K562 (cell line): ENCODE measurements at regions of chr1 and their contacts with region 1.

Region 1: GRCh38 chr1:211654838-211655787 is 20.3 kb downstream of the NEK2 start:
- DNase-seq: peak; percentile 86 to 94 (median 88)
- ATAC-seq: peak; percentile 98
- H3K4me3 ChIP-seq: no peak overlapping the region
- H3K27ac ChIP-seq: no peak overlapping the region
- H3K4me1 ChIP-seq: peaks cover 0 to 9% of the 10 kb centered on the region in 2 experiments; a peak in 3 of 5 replicates
- H3K27me3 ChIP-seq: no peaks in the 10 kb centered on the region
- CTCF ChIP-seq: peak; percentile 97 to 99 (median 99)
- EP300 ChIP-seq: peak; percentile 29; the same call in 1 of the 2 replicates
- POLR2A ChIP-seq: no peak
- RAD21 ChIP-seq: peak; percentile 100

Region 2: DNA sequence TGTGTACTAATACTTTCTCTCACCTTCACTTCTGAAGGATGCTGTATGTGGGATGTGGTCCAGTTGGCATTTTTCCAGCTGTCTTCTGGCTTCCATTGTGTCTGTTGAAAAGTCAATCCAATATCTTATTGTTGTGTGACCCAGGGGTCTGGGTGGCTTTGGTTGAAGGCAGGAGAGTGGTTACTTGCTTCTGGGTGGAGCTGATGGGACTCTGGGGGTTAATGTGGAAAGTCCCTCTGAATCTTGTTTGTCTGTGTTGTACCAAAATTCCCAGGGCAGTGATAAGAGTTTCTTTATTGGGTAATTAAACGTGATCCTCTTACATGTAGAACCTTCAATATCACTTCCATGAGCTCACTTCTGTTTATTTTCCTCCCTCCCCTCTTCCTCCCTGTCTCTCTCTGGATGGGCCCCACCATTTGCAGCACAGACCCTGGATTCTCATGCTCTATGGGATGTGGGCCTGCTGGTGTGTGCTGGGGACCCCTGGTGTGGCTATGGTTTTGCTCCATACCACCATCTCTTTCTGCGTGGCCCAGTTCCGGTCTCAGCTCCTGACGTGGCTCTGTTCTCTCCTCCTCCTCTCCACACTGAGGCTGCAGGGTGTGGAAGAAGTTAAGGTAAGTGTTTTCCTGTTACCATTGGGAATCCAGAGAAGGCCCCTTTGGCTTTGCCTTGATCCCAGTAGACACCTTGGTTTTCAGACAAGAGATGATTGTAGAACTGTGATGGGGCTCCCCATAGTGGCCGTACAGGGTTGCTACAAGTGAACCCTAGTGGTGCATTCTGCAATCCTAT is 1254.9 kb before region 1 on chr1:
- CTCF ChIA-PET with region 1: no interaction called
- POLR2A ChIA-PET with region 1: no interaction called
- in situ Hi-C with region 1: loop called (anchors 25 kb)
- intact Hi-C with region 1: no loop called
- DNase-seq: peak; percentile 45 to 66 (median 57)
- ATAC-seq: peak; percentile 98
- H3K4me3 ChIP-seq: no peak overlapping the region
- H3K27ac ChIP-seq: no peak overlapping the region
- H3K4me1 ChIP-seq: no peaks in the 10 kb centered on the region
- H3K27me3 ChIP-seq: no peaks in the 10 kb centered on the region; a peak in 1 of 5 replicates
- CTCF ChIP-seq: peak; percentile 75 to 93 (median 84)
- EP300 ChIP-seq: no peak
- POLR2A ChIP-seq: no peak
- RAD21 ChIP-seq: peak; percentile 38 to 71; a peak in 3 of 4 replicates

Region 3: DNA sequence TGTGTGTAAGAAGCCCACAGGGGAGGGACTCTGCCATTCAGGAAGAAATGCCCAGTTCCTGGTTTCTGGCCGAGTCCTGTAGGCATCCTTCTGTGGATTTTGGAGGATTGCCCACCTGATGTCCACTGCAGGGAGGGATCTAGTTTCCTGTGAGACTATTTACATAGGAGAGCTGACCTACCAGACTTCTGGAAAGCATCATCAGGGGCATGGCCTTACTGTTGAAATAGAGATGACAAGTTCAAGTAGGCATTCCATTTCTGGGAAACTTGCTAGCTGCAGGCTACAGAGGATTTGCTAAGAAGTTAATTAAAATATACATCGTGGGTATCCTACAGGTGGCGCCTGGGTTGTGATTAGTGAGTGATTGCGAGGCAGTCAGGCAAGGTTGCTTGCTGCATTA is 1177.7 kb before region 1 on chr1:
- CTCF ChIA-PET with region 1: no interaction called
- POLR2A ChIA-PET with region 1: no interaction called
- in situ Hi-C with region 1: no loop called
- intact Hi-C with region 1: no loop called
- DNase-seq: peak in 1 of 4 experiments; percentile 4
- ATAC-seq: no peak
- H3K4me3 ChIP-seq: no peak overlapping the region
- H3K27ac ChIP-seq: no peak overlapping the region
- H3K4me1 ChIP-seq: no peaks in the 10 kb centered on the region
- H3K27me3 ChIP-seq: no peaks in the 10 kb centered on the region; a peak in 1 of 5 replicates
- CTCF ChIP-seq: peak in 1 of 3 experiments; percentile 6; a peak in 1 of 6 replicates
- EP300 ChIP-seq: no peak
- POLR2A ChIP-seq: no peak
- RAD21 ChIP-seq: no peak

Region 4: DNA sequence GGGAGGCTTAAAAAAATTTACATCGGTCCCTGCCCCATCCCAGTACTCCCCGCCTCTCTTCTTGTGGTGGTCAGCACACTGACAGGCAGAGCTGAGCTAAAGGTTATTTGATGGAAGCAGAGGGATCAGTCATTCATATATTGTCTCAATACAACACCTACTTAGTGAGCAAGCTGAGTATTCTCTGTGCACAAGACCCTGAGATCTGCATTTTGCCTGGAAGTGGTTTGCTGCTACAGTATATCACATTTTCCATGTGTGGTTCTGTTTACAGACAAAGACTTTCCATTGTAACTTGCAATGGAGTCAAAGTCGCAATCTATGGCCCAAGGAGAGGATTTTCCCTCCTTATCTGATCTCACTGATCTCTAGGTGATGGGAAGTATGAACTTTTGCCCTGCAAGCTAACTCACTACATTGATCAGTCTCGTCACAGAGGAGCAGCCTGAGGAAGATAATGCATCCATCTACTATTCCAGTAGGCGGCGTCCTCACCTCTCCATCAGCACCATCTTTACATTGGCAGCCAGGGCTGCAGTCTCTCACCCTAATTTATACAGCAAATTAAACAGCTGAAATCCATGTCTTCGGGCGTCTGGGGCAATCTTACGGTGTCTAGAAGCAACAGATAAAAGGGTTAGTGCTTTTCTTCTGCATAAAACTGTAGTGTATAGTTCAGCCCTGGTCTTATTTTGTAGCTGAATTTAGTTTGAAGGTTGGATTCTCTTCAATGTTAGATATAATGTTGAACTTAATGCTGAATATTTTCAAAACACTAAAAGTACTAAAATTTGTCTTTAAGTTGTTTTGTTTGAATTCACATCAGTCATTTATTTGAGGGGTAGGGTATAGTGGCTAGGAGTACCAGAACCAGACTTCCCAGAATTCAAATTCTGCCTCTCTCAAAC is 331.7 kb before region 1 on chr1:
- CTCF ChIA-PET with region 1: interaction called, 3 read pairs
- POLR2A ChIA-PET with region 1: no interaction called
- in situ Hi-C with region 1: loop called (anchors 10 kb)
- intact Hi-C with region 1: loop called (anchors 1 kb)
- DNase-seq: peak; percentile 42 to 85 (median 62)
- ATAC-seq: peak; percentile 79
- H3K4me3 ChIP-seq: no peak overlapping the region
- H3K27ac ChIP-seq: no peak overlapping the region
- H3K4me1 ChIP-seq: peaks cover 17 to 24% of the 10 kb centered on the region in 2 experiments
- H3K27me3 ChIP-seq: no peaks in the 10 kb centered on the region
- CTCF ChIP-seq: peak; percentile 91 to 95 (median 91)
- EP300 ChIP-seq: no peak
- POLR2A ChIP-seq: no peak
- RAD21 ChIP-seq: peak; percentile 92 to 95

Region 5: GRCh38 chr1:211514030-211514754 is 140.9 kb before region 1 on chr1:
- CTCF ChIA-PET with region 1: interaction called, 29 read pairs
- POLR2A ChIA-PET with region 1: no interaction called
- in situ Hi-C with region 1: loop called (anchors 5 kb)
- intact Hi-C with region 1: loop called (anchors 1 kb)
- DNase-seq: peak; percentile 91 to 96 (median 92)
- ATAC-seq: peak; percentile 91
- H3K4me3 ChIP-seq: no peak overlapping the region
- H3K27ac ChIP-seq: no peak overlapping the region
- H3K4me1 ChIP-seq: peaks cover 15 to 30% of the 10 kb centered on the region in 2 experiments
- H3K27me3 ChIP-seq: no peaks in the 10 kb centered on the region
- CTCF ChIP-seq: peak; percentile 95 to 98 (median 97)
- EP300 ChIP-seq: peak; percentile 22; the same call in 1 of the 2 replicates
- POLR2A ChIP-seq: no peak
- RAD21 ChIP-seq: peak; percentile 95 to 97

Region 6: DNA sequence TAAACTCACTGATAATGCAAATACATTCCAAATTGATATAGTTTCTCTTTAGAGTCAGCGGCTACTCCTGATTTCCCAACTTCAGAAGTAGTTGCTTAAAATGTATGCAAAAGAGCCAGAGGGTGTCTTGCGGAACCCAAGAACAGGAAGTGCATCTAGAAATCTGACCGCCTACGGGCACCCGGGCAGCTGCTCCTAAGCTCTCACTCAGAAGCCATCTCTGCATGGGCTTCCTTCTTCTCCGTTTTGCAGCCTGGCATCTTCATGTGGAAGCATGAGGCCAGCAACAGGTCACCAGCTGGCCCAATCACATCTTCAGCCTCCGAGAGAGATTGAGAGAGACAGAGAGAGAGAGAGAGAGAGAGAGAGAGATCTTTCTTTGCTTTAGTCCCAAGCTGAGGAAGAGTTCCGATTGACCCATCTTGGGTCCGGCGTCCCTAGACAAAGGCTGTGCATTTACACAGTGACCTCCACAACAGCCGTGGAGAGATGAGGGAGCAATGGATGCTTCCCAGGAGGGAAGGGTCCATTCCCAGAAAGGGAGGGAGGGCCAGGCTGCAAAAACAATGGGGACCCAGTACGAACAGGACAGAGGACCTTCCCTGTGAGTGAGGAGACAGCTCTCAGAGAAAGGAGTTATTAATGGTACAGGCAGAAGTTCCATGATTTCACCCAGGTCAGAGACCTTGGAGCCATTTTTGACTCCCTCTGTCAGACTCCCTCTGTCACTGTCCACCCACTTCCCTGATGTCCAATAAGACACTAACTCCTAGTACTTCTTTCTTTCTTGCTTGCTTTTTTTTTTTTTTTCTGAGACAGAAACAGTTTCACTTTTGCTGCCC is 48.0 kb before region 1 on chr1:
- CTCF ChIA-PET with region 1: no interaction called
- POLR2A ChIA-PET with region 1: interaction called, 3 read pairs
- in situ Hi-C with region 1: no loop called
- intact Hi-C with region 1: loop called (anchors 2 kb)
- DNase-seq: peak; percentile 50 to 85 (median 63)
- ATAC-seq: peak; percentile 81
- H3K4me3 ChIP-seq: peak overlapping the region; percentile 49
- H3K27ac ChIP-seq: peak overlapping the region; percentile 83
- H3K4me1 ChIP-seq: peaks cover 36 to 51% of the 10 kb centered on the region in 2 experiments; a peak in 4 of 5 replicates
- H3K27me3 ChIP-seq: no peaks in the 10 kb centered on the region
- CTCF ChIP-seq: no peak
- EP300 ChIP-seq: peak; percentile 17; the same call in 1 of the 2 replicates
- POLR2A ChIP-seq: peak; percentile 62
- RAD21 ChIP-seq: peak in 1 of 2 experiments; percentile 32; a peak in 2 of 4 replicates

Region 7: DNA sequence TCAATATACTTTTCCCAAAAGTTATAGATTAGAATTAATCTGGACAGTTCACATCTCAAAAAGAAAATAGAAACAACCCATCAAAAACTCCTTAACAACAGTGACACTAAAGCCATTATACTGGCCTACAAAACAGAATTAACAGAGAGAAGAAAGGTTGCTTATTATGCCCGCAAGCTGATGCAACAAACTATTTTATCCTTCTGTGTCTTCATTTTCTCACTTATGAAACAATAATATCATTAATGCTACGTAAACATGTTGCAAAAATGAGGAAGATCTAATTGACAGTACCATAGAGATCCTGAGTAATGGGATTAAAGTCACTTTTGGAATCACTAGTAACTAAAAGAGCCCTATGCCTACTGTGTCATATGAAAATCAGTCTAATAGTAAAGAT is 142.9 kb after region 1 on chr1:
- CTCF ChIA-PET with region 1: no interaction called
- POLR2A ChIA-PET with region 1: no interaction called
- in situ Hi-C with region 1: no loop called
- intact Hi-C with region 1: no loop called
- DNase-seq: no peak
- ATAC-seq: no peak
- H3K4me3 ChIP-seq: no peak overlapping the region
- H3K27ac ChIP-seq: no peak overlapping the region
- H3K4me1 ChIP-seq: peaks cover 0 to 8% of the 10 kb centered on the region in 2 experiments; a peak in 1 of 5 replicates
- H3K27me3 ChIP-seq: no peaks in the 10 kb centered on the region
- CTCF ChIP-seq: no peak
- EP300 ChIP-seq: no peak
- POLR2A ChIP-seq: no peak
- RAD21 ChIP-seq: no peak